SK-N-SH (cell line): ENCODE measurements at regions of chr1 and their contacts with region 1.

Region 1: DNA sequence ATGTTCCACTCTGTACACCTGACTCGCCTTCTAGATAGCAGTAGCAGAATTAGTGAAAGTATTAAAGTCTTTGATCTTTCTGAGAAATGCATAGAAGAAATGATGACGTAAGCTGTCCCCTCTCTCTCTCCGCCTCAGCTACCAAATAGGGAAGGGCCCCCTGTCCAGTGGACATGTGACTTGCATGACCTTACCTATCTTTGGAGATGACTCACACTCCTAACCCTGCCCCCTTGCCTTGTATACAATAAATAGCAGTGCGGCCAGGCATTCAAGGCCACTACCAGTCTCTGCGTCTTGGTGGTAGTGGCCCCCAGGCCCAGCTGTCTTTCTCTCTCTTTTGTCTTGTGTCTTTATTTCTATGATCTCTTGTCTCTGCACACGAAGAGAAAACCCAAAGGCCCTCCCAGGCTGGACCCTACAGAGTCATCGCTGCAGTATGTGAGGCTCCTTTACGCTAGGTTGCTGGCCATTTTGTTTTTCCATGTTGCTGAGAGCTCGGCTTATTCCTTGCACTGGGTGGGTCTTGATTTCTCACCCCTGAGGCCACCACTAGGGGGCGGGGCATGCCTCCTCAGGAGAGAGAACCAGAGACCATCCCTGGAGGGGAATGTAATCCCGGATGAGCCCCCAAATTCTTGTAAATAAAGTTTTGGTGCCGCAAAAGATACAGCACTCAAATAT is 16.0 kb upstream of the ZBTB8B start:
- DNase-seq: no peak
- H3K4me3 ChIP-seq: no peak overlapping the region
- H3K27ac ChIP-seq: no peak overlapping the region
- H3K4me1 ChIP-seq: no peaks in the 10 kb centered on the region
- H3K27me3 ChIP-seq: no peaks in the 10 kb centered on the region; the same call in 1 of the 2 replicates
- CTCF ChIP-seq: peak; percentile 17
- EP300 ChIP-seq: no peak
- RAD21 ChIP-seq: no peak

Region 2: DNA sequence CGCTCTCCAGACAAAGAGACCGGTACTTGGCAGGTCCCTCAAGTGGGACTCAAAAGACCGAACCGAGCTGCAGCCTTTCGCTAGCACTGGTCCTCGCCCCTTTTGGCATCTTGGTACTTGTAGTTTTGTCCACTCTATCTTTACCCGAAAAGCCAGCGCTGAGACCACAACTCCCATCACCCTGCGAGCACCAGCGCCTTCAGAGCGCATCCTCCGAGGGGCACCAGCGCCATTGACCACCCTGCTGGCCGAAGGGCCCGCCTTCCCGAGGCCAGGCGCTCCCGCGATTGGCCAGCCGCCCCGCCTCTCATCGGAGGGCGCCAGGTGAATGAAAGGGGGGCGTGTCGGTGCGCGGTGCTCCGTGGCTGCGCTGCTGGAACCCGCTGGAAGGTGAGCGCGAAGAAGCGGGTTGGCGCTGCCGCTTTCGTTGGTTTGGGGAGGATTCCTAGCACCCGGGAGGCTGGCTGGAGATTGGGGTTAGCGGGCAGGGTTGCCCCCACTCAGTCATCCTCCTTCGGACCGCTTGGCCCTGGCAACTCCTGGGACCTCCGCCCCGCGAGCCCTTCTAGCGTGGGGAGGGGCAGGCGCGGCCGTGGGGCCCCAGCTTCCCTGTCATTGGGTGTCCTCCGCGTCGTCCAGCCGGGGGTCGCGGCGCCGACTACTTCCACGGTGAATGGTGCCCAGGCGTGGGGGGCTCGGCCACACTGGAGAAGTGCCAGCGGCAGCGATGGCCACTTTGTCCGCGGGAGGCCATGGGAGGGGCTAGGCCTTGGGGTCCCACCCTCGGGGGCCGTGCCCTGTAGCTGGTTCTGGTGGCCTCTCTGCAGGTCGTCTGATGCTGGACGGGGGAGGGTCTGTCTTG is 16.0 kb after region 1 on chr1 and contains the start of gene ZBTB8B:
- CTCF ChIA-PET with region 1: interaction called, 12 read pairs
- POLR2A ChIA-PET with region 1: no interaction called
- DNase-seq: peak; percentile 99
- H3K4me3 ChIP-seq: peak within 1 kb of the TSS; percentile 67 to 87
- H3K27ac ChIP-seq: peak within 1 kb of the TSS in 1 of 2 experiments; percentile 61; a peak in 2 of 4 replicates
- H3K4me1 ChIP-seq: peaks cover 0 to 6% of the 10 kb centered on the region in 2 experiments; a peak in 1 of 4 replicates
- H3K27me3 ChIP-seq: no peaks in the 10 kb centered on the region; the same call in 1 of the 2 replicates
- CTCF ChIP-seq: no peak
- EP300 ChIP-seq: no peak
- RAD21 ChIP-seq: no peak
- polyA plus RNA-seq, gene ZBTB8B: 0.08 and 0.16 TPM in 2 replicates